ENCODE measurements at regions of chr19 and their contacts with region 1.

Region 1: GRCh38 chr19:35578707-35579106 is 7.3 kb upstream of the PMIS2 start:
- DNase-seq: no peak
- H3K4me3 ChIP-seq: no peak overlapping the region
- H3K27ac ChIP-seq: no peak overlapping the region
- H3K4me1 ChIP-seq: no peaks in the 10 kb centered on the region
- H3K27me3 ChIP-seq: peaks cover 0 to 2% (median 0%) of the 10 kb centered on the region in 5 experiments

Region 2: DNA sequence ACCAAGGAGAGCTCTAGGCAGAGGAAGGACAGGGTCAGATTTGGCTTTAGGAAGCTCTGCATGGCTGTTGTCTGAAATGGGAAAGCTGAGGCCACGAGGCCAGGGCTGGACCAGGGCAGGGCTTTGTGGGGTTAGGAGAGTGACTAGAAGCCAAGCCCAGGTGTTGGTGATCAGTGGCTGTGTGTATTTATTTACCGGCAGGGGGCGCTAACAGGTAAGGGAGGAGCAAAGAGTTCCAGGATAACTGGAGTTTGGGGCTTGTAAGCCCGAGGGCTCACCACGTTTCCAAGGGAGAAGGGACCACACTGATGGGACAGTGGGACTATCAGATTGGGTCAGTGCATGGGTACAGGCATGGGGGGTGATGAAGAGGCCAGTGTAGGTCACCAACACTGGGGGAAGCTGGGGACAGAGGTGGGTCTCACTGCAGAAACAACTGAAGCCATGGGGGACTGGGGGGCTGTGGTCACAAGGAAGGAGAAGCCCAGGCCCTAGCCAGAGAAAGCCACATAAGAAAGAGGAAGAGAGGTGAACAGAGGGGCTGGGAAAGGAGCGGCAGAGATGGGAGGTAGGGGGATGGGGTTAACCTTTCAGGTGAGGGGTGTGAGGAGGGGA is 29.4 kb before region 1 on chr19:
- CTCF ChIA-PET with region 1: no interaction called
- POLR2A ChIA-PET with region 1: no interaction called
- DNase-seq: peak; percentile 58 to 76 (median 73)
- H3K4me3 ChIP-seq: no peak overlapping the region
- H3K27ac ChIP-seq: no peak overlapping the region
- H3K4me1 ChIP-seq: peaks cover 1 to 20% (median 15%) of the 10 kb centered on the region in 4 experiments
- H3K27me3 ChIP-seq: no peaks in the 10 kb centered on the region

Region 3: DNA sequence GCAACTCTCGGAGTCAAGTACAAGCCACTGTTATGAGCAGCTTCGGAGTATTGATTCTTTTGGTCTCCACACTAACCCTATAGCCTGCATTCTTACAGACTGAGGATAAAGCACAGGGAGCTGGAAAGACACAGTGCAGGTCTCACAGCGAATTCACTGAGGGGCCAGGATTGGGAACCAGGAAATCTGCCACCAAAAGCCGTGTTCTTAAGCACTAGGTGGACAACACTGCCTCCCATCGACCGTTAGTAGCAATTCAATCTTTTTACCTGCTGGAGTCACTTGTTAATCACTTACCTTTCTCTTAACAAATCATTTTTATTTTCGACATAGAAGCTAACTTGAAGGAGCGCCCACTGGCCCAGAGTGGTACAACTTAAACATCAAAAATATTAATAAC is 13.5 kb after region 1 on chr19:
- CTCF ChIA-PET with region 1: interaction called, 14 read pairs
- POLR2A ChIA-PET with region 1: no interaction called
- DNase-seq: peak; percentile 72 to 82 (median 76)
- H3K4me3 ChIP-seq: no peak overlapping the region
- H3K27ac ChIP-seq: no peak overlapping the region
- H3K4me1 ChIP-seq: no peaks in the 10 kb centered on the region
- H3K27me3 ChIP-seq: peaks cover 0 to 5% (median 0%) of the 10 kb centered on the region in 5 experiments

Measured in common myeloid progenitor, CD34-positive (primary cell).